ENCODE measurements at regions of chr1 and their contacts with region 1.

Region 1: GRCh38 chr1:97385536-97386277 is 535.1 kb downstream of the DPYD start:
- DNase-seq: no peak
- ATAC-seq: no peak
- H3K4me3 Mint-ChIP-seq: no peak overlapping the region
- H3K27ac Mint-ChIP-seq: no peak overlapping the region
- H3K4me1 Mint-ChIP-seq: no peaks in the 10 kb centered on the region
- H3K27me3 Mint-ChIP-seq: no peaks in the 10 kb centered on the region
- CTCF ChIP-seq: no peak

Region 2: DNA sequence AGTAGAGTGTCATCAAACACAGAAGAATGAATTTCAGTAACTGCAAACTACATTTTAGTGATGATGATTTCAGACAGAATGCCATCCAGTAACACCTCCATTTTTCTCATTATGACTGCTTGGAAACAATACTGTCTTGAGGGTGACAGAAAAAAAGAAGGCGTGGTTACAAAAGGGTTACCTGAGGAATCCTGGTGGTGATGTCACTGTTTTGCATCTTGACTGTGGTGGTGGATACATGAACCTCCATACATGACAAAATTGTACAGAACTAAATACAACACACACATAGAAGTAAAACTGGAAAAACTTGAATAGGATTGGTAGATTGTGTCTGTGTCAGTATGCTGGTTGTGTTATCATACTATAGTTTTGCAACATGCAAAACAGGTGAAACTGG is 288.2 kb before region 1 on chr1:
- CTCF ChIA-PET with region 1: no interaction called
- POLR2A ChIA-PET with region 1: no interaction called
- intact Hi-C with region 1: no loop called
- DNase-seq: no peak
- ATAC-seq: no peak
- H3K4me3 Mint-ChIP-seq: no peak overlapping the region
- H3K27ac Mint-ChIP-seq: no peak overlapping the region
- H3K4me1 Mint-ChIP-seq: no peaks in the 10 kb centered on the region
- H3K27me3 Mint-ChIP-seq: no peaks in the 10 kb centered on the region
- CTCF ChIP-seq: no peak

Region 3: GRCh38 chr1:97308131-97308530 is 77.6 kb before region 1 on chr1:
- CTCF ChIA-PET with region 1: no interaction called
- POLR2A ChIA-PET with region 1: interaction called, 18 read pairs
- intact Hi-C with region 1: no loop called
- DNase-seq: no peak
- ATAC-seq: no peak
- H3K4me3 Mint-ChIP-seq: no peak overlapping the region
- H3K27ac Mint-ChIP-seq: no peak overlapping the region
- H3K4me1 Mint-ChIP-seq: no peaks in the 10 kb centered on the region
- H3K27me3 Mint-ChIP-seq: no peaks in the 10 kb centered on the region
- CTCF ChIP-seq: no peak

Measured in activated B cell treated with CpG ODN at 0.5 μM for 24 hours (primary cell).